ENCODE measurements at regions of chr19 and their contacts with region 1.

Region 1: GRCh38 chr19:30688696-30689095 is 316.5 kb downstream of the ZNF536 start:
- DNase-seq: no peak
- ATAC-seq: no peak
- H3K4me3 ChIP-seq: no peak overlapping the region
- H3K4me3 Mint-ChIP-seq: no peak overlapping the region
- H3K27ac ChIP-seq: no peak overlapping the region
- H3K27ac Mint-ChIP-seq: no peak overlapping the region
- H3K4me1 ChIP-seq: no peaks in the 10 kb centered on the region
- H3K4me1 Mint-ChIP-seq: peaks cover 0 to 9% (median 3%) of the 10 kb centered on the region in 3 donors
- H3K27me3 ChIP-seq: peaks cover 12 to 40% of the 10 kb centered on the region in 2 experiments
- H3K27me3 Mint-ChIP-seq: peaks cover 65 to 71% of the 10 kb centered on the region in 2 donors

Region 2: GRCh38 chr19:29872224-29872731 is 816.4 kb before region 1 on chr19:
- CTCF ChIA-PET with region 1: no interaction called
- POLR2A ChIA-PET with region 1: no interaction called
- DNase-seq: peak in 6 of 35 experiments; percentile 2 to 47 (median 10)
- ATAC-seq: peak in 3 of 4 experiments; percentile 33 to 51 (median 46)
- H3K4me3 ChIP-seq: no peak overlapping the region
- H3K4me3 Mint-ChIP-seq: peak overlapping the region; percentile 24 to 70 (median 31)
- H3K27ac ChIP-seq: no peak overlapping the region
- H3K27ac Mint-ChIP-seq: no peak overlapping the region
- H3K4me1 ChIP-seq: peaks cover 0 to 21% of the 10 kb centered on the region in 2 experiments
- H3K4me1 Mint-ChIP-seq: peaks cover 7 to 18% (median 16%) of the 10 kb centered on the region in 3 donors
- H3K27me3 ChIP-seq: peaks cover 2 to 41% of the 10 kb centered on the region in 2 experiments
- H3K27me3 Mint-ChIP-seq: peaks cover 7 to 26% of the 10 kb centered on the region in 2 donors

Region 3: GRCh38 chr19:30651066-30651465 is 37.6 kb before region 1 on chr19:
- CTCF ChIA-PET with region 1: no interaction called
- POLR2A ChIA-PET with region 1: no interaction called
- DNase-seq: no peak
- ATAC-seq: no peak
- H3K4me3 ChIP-seq: no peak overlapping the region
- H3K4me3 Mint-ChIP-seq: no peak overlapping the region
- H3K27ac ChIP-seq: no peak overlapping the region
- H3K27ac Mint-ChIP-seq: no peak overlapping the region
- H3K4me1 ChIP-seq: no peaks in the 10 kb centered on the region
- H3K4me1 Mint-ChIP-seq: no peaks in the 10 kb centered on the region
- H3K27me3 ChIP-seq: peaks cover 0 to 18% of the 10 kb centered on the region in 2 experiments
- H3K27me3 Mint-ChIP-seq: peaks cover 32 to 39% of the 10 kb centered on the region in 2 donors

Region 4: DNA sequence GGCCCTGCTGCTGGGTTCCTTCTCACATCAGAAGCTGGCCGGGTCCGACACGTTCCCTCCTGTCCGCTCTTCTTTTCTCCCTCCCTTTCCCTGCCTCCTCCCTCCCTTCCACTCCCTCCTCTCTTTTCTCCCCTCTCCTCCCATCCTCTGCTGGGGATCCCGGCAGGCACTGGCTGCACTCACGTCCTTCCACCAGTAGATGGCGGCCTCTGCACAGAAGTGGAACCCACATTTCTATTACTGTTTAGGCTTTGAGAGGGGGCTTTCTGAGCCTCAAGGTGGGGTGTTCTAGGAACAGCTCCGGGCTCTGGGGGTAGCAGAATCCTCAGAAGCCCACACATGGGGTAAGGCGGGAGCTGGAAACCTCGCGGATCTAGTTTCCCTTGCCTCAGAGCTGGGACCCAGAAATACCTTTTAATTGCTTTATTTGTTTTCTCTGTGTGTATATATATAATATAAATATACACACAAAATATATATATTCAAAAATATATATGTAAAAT is 22.3 kb before region 1 on chr19:
- CTCF ChIA-PET with region 1: interaction called in 1 of 2 experiments, 3 read pairs
- POLR2A ChIA-PET with region 1: interaction called in 1 of 2 experiments, 14 read pairs
- DNase-seq: peak in 23 of 35 experiments; percentile 7 to 50 (median 23)
- ATAC-seq: peak in 1 of 4 experiments; percentile 63
- H3K4me3 ChIP-seq: no peak overlapping the region
- H3K4me3 Mint-ChIP-seq: no peak overlapping the region
- H3K27ac ChIP-seq: no peak overlapping the region
- H3K27ac Mint-ChIP-seq: no peak overlapping the region
- H3K4me1 ChIP-seq: peaks cover 0 to 3% of the 10 kb centered on the region in 2 experiments
- H3K4me1 Mint-ChIP-seq: no peaks in the 10 kb centered on the region
- H3K27me3 ChIP-seq: peaks cover 5 to 55% of the 10 kb centered on the region in 2 experiments
- H3K27me3 Mint-ChIP-seq: peaks cover 37 to 43% of the 10 kb centered on the region in 2 donors

Region 5: GRCh38 chr19:30719189-30719998 is 30.7 kb after region 1 on chr19:
- CTCF ChIA-PET with region 1: no interaction called
- POLR2A ChIA-PET with region 1: no interaction called
- DNase-seq: no peak
- ATAC-seq: no peak
- H3K4me3 ChIP-seq: peak overlapping the region; percentile 15 to 21
- H3K4me3 Mint-ChIP-seq: peak overlapping the region; percentile 59 to 65 (median 61)
- H3K27ac ChIP-seq: no peak overlapping the region
- H3K27ac Mint-ChIP-seq: no peak overlapping the region
- H3K4me1 ChIP-seq: peaks cover 0 to 8% of the 10 kb centered on the region in 2 experiments
- H3K4me1 Mint-ChIP-seq: peaks cover 0 to 13% (median 9%) of the 10 kb centered on the region in 3 donors
- H3K27me3 ChIP-seq: peaks cover 0 to 7% of the 10 kb centered on the region in 2 experiments
- H3K27me3 Mint-ChIP-seq: peaks cover 17 to 22% of the 10 kb centered on the region in 2 donors